ENCODE measurements at regions of chr20 and their contacts with region 1.

Region 1: GRCh38 chr20:9829835-9830234 is 9.0 kb downstream of the PAK5 start:
- DNase-seq: no peak
- ATAC-seq: no peak
- H3K4me3 ChIP-seq: no peak overlapping the region
- H3K27ac ChIP-seq: no peak overlapping the region
- H3K4me1 ChIP-seq: no peaks in the 10 kb centered on the region
- H3K27me3 ChIP-seq: peaks cover 0 to 4% (median 0%) of the 10 kb centered on the region in 7 donors
- CTCF ChIP-seq: no peak

Region 2: GRCh38 chr20:8829256-8829655 is 1000.6 kb before region 1 on chr20:
- intact Hi-C with region 1: no loop called
- DNase-seq: no peak
- ATAC-seq: no peak
- H3K4me3 ChIP-seq: no peak overlapping the region
- H3K27ac ChIP-seq: no peak overlapping the region
- H3K4me1 ChIP-seq: no peaks in the 10 kb centered on the region
- H3K27me3 ChIP-seq: no peaks in the 10 kb centered on the region
- CTCF ChIP-seq: peak in 1 of 9 donors; percentile 8

Region 3: GRCh38 chr20:9810738-9811137 is 19.1 kb before region 1 on chr20:
- intact Hi-C with region 1: loop called in 1 of 10 experiments (anchors 1 kb)
- DNase-seq: no peak
- ATAC-seq: no peak
- H3K4me3 ChIP-seq: no peak overlapping the region
- H3K27ac ChIP-seq: no peak overlapping the region
- H3K4me1 ChIP-seq: no peaks in the 10 kb centered on the region
- H3K27me3 ChIP-seq: peaks cover 0 to 4% (median 0%) of the 10 kb centered on the region in 7 donors
- CTCF ChIP-seq: no peak